Right ventricle myocardium superior (tissue), 1 donor: ENCODE measurements at regions of chr4 and their contacts with region 1.

Region 1: DNA sequence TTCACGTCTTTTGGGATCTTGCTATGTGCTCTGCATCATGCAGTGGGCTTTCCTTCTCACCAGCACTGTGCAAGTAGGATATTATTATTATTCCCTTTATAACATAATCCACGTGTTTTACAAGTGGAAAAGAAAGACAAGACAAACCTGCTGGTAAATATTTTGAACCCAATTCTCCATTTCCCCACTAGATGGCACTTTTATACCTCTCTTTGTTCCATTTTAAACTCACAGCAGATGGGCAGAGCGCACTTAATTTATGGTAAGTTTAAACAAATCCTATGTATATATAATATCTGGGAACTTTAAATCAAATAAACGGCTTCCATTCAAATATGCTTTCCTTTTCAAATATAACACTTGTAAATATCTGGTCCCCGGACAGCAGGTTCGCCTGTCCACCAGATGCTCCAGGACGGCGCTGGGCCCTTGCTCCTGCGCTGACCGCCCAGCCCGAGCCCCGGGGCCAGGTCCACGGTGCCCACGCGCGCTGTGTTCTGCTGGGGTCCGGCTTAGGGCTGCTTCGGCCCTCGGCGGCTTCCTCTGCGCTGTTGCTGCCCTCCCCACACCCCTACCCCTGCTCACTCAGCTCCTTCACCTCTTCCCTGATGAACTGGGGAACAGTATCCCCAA is 31.1 kb downstream of the F11 start:
- DNase-seq: no peak
- ATAC-seq: peak; percentile 53

Region 2: DNA sequence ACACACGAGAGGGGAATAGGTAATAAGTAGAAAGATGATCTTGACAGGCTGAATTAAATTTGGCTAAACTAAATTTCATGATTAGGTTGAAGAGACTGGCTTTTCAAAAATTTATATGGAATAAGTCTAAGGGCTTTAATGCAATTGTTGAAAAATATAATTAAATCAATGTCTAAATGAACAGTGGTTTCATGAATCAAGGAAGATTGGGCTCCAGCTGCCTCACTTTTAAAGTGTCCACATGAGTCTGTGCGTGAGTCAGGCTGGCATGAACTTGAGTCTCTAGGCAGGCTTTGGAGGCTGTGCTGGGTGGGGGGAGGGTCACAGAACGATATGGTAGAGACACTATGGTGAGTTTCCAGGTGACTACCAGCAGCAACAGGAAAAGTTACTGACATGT is 597.1 kb before region 1 on chr4:
- intact Hi-C with region 1: no loop called
- DNase-seq: no peak
- ATAC-seq: peak; percentile 55

Region 3: DNA sequence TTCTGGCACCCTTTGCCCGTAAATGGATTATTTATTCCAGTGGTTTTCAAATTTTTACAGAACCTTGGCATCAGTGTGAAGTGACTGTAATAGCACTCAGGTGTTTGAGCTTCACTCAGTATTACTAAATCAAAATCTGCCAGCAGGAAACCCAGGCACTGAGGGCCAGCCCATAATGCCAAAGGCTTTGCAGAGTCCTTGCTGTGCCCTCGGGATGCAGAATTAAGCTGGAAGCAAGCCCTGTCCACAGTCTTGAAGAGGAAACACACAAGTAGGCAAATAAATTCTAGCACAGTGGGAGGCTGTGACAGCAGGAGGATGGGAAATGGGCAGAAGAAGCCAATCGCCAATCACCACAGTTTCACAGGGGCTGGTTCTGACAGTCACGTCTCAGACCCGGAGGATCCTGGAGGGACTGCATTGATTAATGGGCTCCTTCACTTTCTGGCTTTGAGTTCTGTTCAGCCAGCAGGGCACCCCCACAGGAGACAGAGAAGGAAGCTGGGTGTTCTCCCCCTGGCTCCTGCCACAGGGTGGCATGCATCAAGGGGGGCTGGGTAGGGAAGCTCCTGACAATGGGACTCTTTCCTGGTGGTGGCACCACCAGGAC is 119.4 kb after region 1 on chr4:
- intact Hi-C with region 1: no loop called
- DNase-seq: no peak
- ATAC-seq: no peak

Region 4: DNA sequence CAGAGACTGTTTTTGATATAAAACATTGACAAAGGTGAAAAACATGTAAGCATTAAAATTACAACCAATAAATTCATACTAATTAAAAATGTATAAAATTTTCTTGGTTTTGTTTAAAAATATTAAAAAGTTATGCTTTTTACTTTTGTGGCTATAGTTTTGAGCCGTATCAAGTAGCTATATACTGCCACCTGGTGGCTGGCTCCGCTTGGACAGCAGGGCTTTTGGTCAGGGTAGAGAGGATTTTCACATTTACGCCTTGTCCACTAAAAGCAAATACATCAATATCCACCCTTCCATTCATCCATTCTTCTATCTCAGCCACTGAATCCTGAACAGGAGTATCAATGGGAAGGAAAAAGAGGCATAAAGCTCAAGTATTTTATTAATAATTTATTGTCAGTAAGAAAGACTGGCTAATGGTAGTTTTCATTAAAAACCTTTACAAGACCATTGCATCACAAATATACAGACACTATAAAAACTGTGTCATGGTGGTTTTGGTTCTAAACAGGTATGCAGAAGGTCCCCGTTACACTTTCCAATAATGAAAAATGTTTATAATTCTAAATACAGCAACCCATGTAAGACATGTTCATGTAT is 290.4 kb after region 1 on chr4:
- intact Hi-C with region 1: loop called (anchors 2 kb)
- DNase-seq: peak; percentile 80
- ATAC-seq: peak; percentile 82